Activated B cell treated with CpG ODN at 0.5 μM for 24 hours (primary cell): ENCODE measurements at regions of chr18 and their contacts with region 1.

Region 1: GRCh38 chr18:62287781-62288664 is 37.1 kb upstream of the TNFRSF11A start:
- DNase-seq: no peak
- ATAC-seq: peak; percentile 9
- H3K4me3 Mint-ChIP-seq: peak overlapping the region; percentile 54
- H3K27ac Mint-ChIP-seq: peak overlapping the region; percentile 72
- H3K4me1 Mint-ChIP-seq: peaks cover 26% of the 10 kb centered on the region
- H3K27me3 Mint-ChIP-seq: no peaks in the 10 kb centered on the region
- CTCF ChIP-seq: no peak

Region 2: GRCh38 chr18:62277045-62277444 is 11.0 kb before region 1 on chr18:
- CTCF ChIA-PET with region 1: no interaction called
- POLR2A ChIA-PET with region 1: no interaction called
- intact Hi-C with region 1: loop called (anchors 2 kb)
- DNase-seq: no peak
- ATAC-seq: no peak
- H3K4me3 Mint-ChIP-seq: no peak overlapping the region
- H3K27ac Mint-ChIP-seq: no peak overlapping the region
- H3K4me1 Mint-ChIP-seq: peaks cover 5% of the 10 kb centered on the region
- H3K27me3 Mint-ChIP-seq: no peaks in the 10 kb centered on the region
- CTCF ChIP-seq: no peak

Region 3: GRCh38 chr18:62300359-62300963 is 12.4 kb after region 1 on chr18:
- CTCF ChIA-PET with region 1: no interaction called
- POLR2A ChIA-PET with region 1: no interaction called
- intact Hi-C with region 1: loop called (anchors 1 kb)
- DNase-seq: no peak
- ATAC-seq: no peak
- H3K4me3 Mint-ChIP-seq: no peak overlapping the region
- H3K27ac Mint-ChIP-seq: no peak overlapping the region
- H3K4me1 Mint-ChIP-seq: peaks cover 9% of the 10 kb centered on the region
- H3K27me3 Mint-ChIP-seq: no peaks in the 10 kb centered on the region
- CTCF ChIP-seq: no peak

Region 4: DNA sequence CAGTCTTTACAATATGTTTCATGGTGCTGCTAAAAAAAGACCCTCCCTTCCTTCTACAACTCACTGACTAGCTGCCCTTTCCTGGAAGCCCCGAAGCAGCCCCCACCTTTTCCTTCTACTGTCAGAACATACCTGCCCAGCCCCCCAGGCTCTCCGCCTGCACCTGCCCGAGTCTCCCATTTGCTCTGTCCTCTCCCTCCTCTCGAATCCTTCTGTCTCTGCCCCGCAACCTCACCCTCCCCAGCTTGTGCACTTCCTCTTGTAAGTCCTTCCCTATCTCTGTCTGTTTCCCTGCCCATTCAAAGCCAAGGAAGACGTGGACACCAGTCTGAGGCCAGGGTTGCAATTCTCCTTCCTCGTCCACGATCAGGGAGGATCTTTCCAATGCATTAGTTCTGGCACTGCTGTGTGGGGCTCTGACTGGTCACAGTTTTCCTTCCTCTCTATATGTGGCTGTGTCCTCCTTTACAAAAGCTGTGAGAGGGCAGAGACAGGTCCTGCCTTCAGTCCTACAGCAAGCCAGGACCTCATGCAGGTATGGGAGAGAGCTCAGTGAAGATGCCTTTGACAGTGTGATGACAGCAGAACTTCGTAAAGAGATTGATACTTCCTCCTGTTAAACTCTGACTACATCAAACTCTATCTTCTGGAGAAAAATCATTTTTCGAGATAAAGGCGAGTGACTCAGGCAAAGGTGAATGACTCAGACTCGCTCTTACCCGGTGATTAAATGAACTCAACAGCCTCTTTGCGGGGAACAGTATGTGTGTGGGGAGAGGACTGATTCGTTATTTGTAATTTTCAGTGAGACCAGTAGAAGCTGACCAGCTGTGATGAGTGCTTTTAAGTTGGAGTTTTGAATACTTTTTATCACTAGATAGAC is 51.3 kb after region 1 on chr18:
- CTCF ChIA-PET with region 1: no interaction called
- POLR2A ChIA-PET with region 1: no interaction called
- intact Hi-C with region 1: no loop called
- DNase-seq: no peak
- ATAC-seq: no peak
- H3K4me3 Mint-ChIP-seq: no peak overlapping the region
- H3K27ac Mint-ChIP-seq: no peak overlapping the region
- H3K4me1 Mint-ChIP-seq: no peaks in the 10 kb centered on the region
- H3K27me3 Mint-ChIP-seq: peaks cover 19% of the 10 kb centered on the region
- CTCF ChIP-seq: no peak

Region 5: GRCh38 chr18:62505669-62506494 is 217.9 kb after region 1 on chr18:
- CTCF ChIA-PET with region 1: no interaction called
- POLR2A ChIA-PET with region 1: no interaction called
- intact Hi-C with region 1: loop called (anchors 1 kb)
- DNase-seq: no peak
- ATAC-seq: peak; percentile 84
- H3K4me3 Mint-ChIP-seq: peak overlapping the region; percentile 73
- H3K27ac Mint-ChIP-seq: peak overlapping the region; percentile 92
- H3K4me1 Mint-ChIP-seq: peaks cover 19% of the 10 kb centered on the region
- H3K27me3 Mint-ChIP-seq: no peaks in the 10 kb centered on the region
- CTCF ChIP-seq: no peak